PC-9 (cell line): ENCODE measurements at regions of chr9 and their contacts with region 1.

Region 1: GRCh38 chr9:108053555-108054061 is 564.0 kb upstream of the KLF4 start:
- DNase-seq: no peak
- H3K4me3 ChIP-seq: no peak overlapping the region
- H3K27ac ChIP-seq: no peak overlapping the region
- H3K4me1 ChIP-seq: peaks cover 58% of the 10 kb centered on the region
- H3K27me3 ChIP-seq: no peaks in the 10 kb centered on the region
- CTCF ChIP-seq: no peak

Region 2: DNA sequence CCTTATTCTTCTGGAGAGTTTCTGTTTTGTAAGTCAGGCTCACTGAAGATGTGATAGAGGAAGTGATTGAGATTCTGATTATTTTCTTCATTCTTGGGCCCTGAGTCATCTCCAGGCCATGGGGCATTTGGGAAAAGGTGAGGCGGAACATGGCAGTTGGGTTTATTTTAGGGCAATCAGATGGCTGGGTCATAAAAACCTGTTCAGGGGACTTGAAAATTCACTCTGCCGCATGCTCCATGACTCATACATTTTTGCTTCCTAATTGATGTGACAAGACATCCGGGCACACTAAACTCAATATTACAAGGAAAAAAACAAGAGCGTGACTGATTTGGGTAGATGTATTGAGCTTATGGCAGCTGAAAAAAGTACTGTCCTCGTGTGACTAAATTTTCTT is 298.3 kb before region 1 on chr9:
- CTCF ChIA-PET with region 1: no interaction called
- POLR2A ChIA-PET with region 1: no interaction called
- intact Hi-C with region 1: loop called (anchors 2 kb)
- DNase-seq: peak; percentile 85 to 99
- H3K4me3 ChIP-seq: 0 out of 2 replicates have a peak overlapping the region, but pooled peaks have one; percentile 20
- H3K27ac ChIP-seq: peak overlapping the region; percentile 99
- H3K4me1 ChIP-seq: peaks cover 60% of the 10 kb centered on the region
- H3K27me3 ChIP-seq: no peaks in the 10 kb centered on the region
- CTCF ChIP-seq: no peak

Region 3: DNA sequence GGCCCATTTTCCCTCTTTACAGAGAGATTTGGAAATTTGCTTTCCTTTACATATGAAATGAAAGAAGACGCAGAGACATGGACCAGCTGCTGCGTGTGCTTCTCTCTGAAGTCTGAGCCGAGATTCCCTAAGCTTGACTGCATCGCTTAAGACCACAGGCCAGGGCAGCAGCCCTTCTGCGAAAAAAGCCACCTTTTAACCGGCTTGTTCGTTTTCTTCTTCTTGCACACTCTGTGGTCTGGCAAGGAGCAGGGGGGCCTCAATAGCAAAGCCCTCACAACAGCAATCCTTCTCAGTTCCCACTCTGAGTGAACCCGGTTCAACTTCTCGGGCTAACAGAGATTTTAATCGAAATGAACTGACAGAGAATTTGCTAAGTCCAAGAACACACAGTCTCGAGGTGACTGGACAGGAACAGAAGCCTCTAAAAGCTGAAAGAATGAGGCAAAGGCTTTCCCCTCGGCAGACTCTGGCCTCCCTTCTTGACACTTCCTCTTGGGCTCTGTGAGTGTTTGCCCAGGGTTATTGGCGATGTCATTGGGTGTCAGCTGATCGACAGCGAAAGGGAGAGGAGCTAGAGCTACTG is 51.1 kb before region 1 on chr9:
- CTCF ChIA-PET with region 1: no interaction called
- POLR2A ChIA-PET with region 1: no interaction called
- intact Hi-C with region 1: no loop called
- DNase-seq: no peak
- H3K4me3 ChIP-seq: no peak overlapping the region
- H3K27ac ChIP-seq: no peak overlapping the region
- H3K4me1 ChIP-seq: no peaks in the 10 kb centered on the region
- H3K27me3 ChIP-seq: no peaks in the 10 kb centered on the region
- CTCF ChIP-seq: no peak

Region 4: GRCh38 chr9:108012886-108013665 is 40.5 kb before region 1 on chr9:
- CTCF ChIA-PET with region 1: no interaction called
- POLR2A ChIA-PET with region 1: no interaction called
- intact Hi-C with region 1: no loop called
- DNase-seq: no peak
- H3K4me3 ChIP-seq: no peak overlapping the region
- H3K27ac ChIP-seq: no peak overlapping the region
- H3K4me1 ChIP-seq: no peaks in the 10 kb centered on the region
- H3K27me3 ChIP-seq: no peaks in the 10 kb centered on the region
- CTCF ChIP-seq: no peak

Region 5: GRCh38 chr9:108099854-108100253 is 46.2 kb after region 1 on chr9:
- CTCF ChIA-PET with region 1: no interaction called
- POLR2A ChIA-PET with region 1: no interaction called
- intact Hi-C with region 1: loop called (anchors 1 kb)
- DNase-seq: peak; percentile 64 to 96
- H3K4me3 ChIP-seq: no peak overlapping the region
- H3K27ac ChIP-seq: peak overlapping the region; percentile 89
- H3K4me1 ChIP-seq: peaks cover 30% of the 10 kb centered on the region
- H3K27me3 ChIP-seq: no peaks in the 10 kb centered on the region
- CTCF ChIP-seq: no peak

Region 6: DNA sequence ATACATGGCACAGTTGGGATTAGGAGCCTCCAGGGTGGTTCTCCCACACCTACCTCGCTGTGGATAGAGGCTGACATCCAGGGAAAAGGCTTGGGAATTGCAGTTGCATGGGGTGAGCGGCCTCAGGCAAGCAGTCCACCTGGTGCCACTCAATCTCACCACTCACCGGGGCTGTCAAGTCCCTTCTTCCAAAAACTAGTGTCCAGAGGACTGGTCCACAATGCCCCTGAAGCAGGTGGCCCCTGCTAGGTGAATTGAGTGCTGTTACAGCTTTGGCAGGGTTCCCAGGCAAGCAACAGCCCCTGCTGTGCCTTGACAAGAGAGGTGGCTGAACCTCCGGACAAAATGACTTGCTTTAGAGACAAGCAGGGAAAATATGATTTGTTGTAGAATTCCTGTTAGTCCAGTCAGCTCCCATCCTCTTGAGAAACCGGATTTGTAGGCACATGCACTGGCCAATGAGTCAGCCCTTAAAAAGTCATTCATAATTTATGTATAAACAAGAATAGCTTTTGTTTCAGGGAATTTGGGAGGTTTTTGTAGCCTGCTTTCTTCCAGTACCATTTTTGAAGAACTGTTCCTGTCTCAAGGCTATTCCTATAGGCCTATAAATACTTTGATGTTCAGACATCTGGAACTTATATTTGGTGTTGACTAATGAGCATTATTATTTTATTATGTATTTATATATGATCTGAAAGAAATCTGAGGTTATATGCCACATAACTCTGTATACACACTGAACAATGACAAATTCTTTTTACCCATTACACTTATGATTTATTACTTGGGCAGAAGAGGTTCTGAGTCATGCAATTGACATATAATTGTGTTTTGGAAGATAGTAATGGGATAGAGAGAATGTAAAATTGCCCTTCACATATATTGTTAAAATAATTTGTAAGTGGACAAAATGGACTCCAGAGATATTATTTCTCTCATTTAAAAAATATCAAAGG is 391.1 kb after region 1 on chr9:
- CTCF ChIA-PET with region 1: no interaction called
- POLR2A ChIA-PET with region 1: no interaction called
- intact Hi-C with region 1: loop called (anchors 5 kb)
- DNase-seq: peak; percentile 71 to 95
- H3K4me3 ChIP-seq: peak overlapping the region; percentile 34; the same call in 1 of the 2 replicates
- H3K27ac ChIP-seq: peak overlapping the region; percentile 80
- H3K4me1 ChIP-seq: peaks cover 45% of the 10 kb centered on the region
- H3K27me3 ChIP-seq: no peaks in the 10 kb centered on the region
- CTCF ChIP-seq: no peak

Region 7: DNA sequence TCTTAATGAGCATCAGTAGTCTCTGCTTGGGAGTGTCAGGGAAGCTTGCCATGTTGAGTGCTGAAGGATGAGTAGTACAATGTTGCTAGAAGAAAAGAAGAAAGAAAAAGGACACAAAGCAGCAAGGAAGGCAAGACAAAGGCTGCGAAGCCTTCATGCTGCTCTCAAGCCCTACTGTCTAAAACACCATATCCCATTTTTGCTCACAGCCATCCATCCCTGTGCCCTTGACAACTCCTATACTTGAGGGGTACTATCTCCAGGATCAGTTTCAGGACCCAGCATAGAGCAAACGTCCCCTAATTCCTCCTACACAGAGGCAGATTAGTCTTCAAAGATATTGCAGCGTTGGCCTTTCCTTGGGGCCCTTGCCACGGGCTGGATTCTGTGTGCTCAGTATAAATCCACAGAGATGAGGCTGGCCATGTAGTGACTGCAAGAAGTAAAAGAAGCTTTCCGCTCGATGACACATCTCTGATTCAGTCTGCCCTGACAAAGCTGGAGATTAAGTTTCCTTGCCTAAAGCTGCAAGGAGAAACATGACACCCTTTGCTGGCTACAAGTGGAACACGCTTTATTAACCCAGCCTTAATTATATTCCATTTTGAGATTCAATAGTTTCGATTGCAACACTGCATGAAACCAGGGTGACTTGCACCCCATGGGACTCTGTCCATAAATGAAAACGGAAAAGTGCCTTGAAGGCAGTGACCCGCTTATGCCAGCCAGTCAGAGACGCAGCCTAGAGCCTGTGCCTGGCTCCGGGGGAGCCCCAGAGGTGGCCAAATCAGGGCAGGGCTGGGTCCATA is 497.6 kb after region 1 on chr9:
- CTCF ChIA-PET with region 1: no interaction called
- POLR2A ChIA-PET with region 1: no interaction called
- intact Hi-C with region 1: loop called (anchors 5 kb)
- DNase-seq: peak; percentile 75 to 99
- H3K4me3 ChIP-seq: peak overlapping the region; percentile 38; the same call in 1 of the 2 replicates
- H3K27ac ChIP-seq: peak overlapping the region; percentile 99
- H3K4me1 ChIP-seq: peaks cover 59% of the 10 kb centered on the region
- H3K27me3 ChIP-seq: no peaks in the 10 kb centered on the region
- CTCF ChIP-seq: no peak